Ascending aorta (tissue), 2 donors: ENCODE measurements at regions of chr17 and their contacts with region 1.

Region 1: DNA sequence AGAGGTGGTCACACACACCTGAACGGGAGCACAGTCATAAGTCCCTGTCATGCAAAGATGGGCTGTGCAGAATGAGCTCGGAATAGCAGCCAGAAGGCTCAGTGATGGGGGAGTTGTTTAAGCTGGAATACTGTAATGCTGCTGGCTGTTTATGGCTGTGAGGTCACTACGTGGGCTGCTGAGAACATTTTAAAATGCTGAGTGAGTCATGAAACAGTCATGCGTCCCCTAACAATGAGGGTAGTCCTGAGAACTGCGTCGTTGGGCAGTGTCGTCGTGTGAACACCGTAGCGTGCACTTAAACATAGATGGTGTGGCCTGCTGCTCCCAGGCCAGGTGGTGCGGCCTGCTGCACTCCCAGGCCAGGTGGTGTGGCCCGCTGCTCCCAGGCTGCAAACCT is 39.7 kb downstream of the TBCD start:
- DNase-seq: no peak
- H3K4me3 ChIP-seq: no peak overlapping the region
- H3K27ac ChIP-seq: no peak overlapping the region
- H3K4me1 ChIP-seq: peaks cover 5 to 8% of the 10 kb centered on the region in 2 donors
- H3K27me3 ChIP-seq: no peaks in the 10 kb centered on the region
- CTCF ChIP-seq: no peak

Region 2: GRCh38 chr17:83012868-83013778 is 221.6 kb after region 1 on chr17:
- intact Hi-C with region 1: loop called (anchors 10 kb)
- DNase-seq: no peak
- H3K4me3 ChIP-seq: no peak overlapping the region
- H3K27ac ChIP-seq: no peak overlapping the region
- H3K4me1 ChIP-seq: no peaks in the 10 kb centered on the region
- H3K27me3 ChIP-seq: no peaks in the 10 kb centered on the region
- CTCF ChIP-seq: no peak